ENCODE measurements at regions of chr21 and their contacts with region 1.

Region 1: GRCh38 chr21:36156339-36156814 is 247 bp upstream of the DOP1B start:
- DNase-seq: peak; percentile 100

Region 2: DNA sequence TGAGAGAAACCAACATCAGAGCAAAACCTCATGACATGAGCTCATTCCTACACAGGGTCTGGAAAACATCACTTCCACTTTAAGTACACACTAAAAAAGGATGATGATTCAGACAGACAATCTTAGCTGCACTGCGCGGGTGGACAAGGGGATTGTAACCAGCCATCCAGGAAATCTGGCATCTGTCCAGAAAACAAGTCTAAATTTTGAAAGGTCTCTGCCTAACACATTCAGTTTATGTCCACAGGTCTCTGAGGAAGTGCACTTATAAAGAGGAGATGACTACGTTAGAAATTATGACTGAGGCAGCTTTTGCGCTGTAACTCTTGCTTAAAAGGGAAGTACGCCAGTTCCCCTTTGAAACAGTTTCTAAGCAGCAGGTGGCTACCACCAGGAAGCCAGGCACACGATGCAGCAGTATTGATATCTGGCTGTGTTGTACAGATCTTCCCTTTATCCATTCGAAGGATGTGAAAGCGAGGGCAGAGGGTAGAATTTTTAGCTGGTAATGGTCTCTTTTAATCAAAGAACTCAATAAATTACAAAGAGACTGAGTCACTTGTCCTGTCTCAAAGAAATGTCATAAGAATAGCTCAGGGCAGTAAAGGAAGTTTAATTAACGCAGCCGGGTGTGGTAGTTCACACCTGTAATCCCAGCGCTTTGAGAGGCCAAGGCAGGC is 224.0 kb before region 1 on chr21:
- intact Hi-C with region 1: no loop called
- DNase-seq: no peak

Region 3: DNA sequence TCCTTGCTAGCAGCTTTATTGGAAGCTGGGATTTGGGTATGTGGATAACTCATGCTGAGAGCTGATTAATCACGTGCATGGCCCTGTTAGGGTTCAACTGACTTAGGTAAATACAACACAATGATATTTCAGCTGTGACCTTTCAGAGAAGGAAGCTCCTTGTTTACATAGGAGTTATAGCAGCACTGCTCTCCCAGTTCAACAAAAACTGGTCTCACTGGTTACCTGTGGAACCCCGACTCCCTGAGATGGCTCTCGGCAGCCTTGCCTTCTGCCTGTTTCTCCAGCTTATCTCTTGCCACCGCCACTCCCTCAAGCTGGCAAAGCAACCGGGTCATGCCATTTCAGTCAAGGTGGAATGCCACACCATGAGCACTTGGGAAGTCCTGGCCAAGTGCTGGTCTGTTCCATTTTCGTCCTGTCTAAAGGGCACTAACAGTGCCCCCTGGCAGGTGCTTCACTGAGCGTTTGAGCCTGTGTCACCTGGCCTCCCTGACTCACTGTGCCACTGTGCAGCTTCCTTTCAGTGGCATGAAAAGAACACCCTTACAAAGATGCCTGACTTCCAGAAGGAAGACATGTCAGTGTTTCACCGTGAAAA is 31.8 kb after region 1 on chr21:
- intact Hi-C with region 1: loop called (anchors 1 kb)
- DNase-seq: peak; percentile 78

Region 4: DNA sequence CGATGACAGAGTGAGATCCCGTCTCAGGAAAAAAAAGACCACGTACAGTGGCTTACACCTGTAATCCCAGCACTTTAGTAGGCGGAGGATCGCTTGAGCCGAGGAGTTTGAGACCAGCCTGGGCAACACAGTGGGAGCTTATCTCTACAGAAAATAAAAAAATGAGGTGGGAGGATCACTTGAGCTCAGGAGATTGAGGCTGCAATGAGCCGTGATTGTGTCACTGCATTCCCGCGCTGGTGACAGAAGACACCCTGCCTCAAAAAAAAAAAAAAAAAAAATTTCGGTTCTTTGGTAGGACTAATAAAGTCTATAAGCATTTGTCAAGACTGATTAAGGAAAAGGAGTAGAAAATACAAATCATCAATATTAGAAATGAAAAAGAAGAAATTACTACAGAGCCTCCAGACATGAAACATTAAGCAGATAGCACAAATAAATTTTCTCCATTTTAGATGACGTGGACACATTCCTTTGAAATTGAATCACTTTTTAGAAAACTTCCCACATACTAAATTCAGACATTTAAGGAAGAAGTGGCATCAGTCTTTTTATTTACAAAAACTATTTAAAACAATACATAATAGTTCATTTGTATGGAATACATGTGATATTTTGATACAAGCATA is 194.0 kb after region 1 on chr21:
- intact Hi-C with region 1: no loop called
- DNase-seq: no peak